ENCODE measurements at regions of chr10 and their contacts with region 1.

Region 1: GRCh38 chr10:101830322-101831168 is 12.3 kb upstream of the OGA start:
- DNase-seq: peak; percentile 91 to 99 (median 94)
- ATAC-seq: peak; percentile 79
- H3K4me3 ChIP-seq: peak overlapping the region; percentile 63
- H3K4me3 Mint-ChIP-seq: peak overlapping the region; percentile 94
- H3K27ac ChIP-seq: peak overlapping the region; percentile 76 to 85
- H3K27ac Mint-ChIP-seq: peak overlapping the region; percentile 99
- H3K4me1 ChIP-seq: peaks cover 69% of the 10 kb centered on the region
- H3K4me1 Mint-ChIP-seq: peaks cover 55% of the 10 kb centered on the region
- H3K27me3 ChIP-seq: no peaks in the 10 kb centered on the region
- H3K27me3 Mint-ChIP-seq: peaks cover 5% of the 10 kb centered on the region
- CTCF ChIP-seq: no peak

Region 2: DNA sequence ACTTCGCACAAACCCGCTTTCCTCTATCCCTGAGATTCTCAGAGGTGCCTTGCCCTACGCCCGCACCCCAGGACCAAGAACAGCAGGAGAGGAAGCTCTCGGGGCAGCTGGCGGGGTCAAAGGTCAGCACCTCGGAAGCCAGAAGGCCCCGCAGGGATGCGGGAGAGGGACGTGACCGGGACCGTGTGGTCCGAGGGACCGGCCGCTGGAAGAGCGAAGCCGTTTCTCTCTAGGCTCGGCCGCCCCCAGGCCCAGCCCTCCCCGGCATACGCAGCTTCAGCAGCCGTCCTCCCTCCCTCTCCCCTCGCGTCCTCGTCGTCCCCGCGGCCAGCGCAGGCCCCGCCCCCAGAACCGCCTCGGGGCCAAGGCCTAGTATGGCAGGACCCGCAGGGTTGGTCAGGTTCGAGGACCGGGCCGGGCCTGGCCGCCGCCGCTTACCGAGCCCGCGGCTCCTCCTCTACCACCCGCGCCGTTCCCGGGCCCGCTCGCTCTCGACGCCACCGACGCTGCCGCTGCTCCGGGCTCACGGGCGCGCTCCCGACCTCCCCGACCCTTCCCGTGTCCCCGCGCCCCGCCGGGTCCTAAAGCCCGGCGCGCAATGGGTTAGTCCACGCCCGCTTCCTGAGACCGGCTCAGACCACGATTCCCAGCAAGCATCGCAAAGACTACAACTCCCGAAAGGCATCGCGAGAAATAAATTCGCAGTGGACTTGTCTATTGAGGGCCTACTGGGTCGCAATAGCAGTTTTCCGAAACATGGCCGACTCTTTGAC is 225.3 kb after region 1 on chr10 and contains the start of gene ARMH3:
- CTCF ChIA-PET with region 1: no interaction called
- POLR2A ChIA-PET with region 1: no interaction called
- intact Hi-C with region 1: loop called in 1 of 2 experiments (anchors 5 kb)
- DNase-seq: peak; percentile 75 to 96 (median 84)
- ATAC-seq: peak; percentile 93
- H3K4me3 ChIP-seq: peak within 1 kb of the TSS; percentile 84
- H3K4me3 Mint-ChIP-seq: peak within 1 kb of the TSS; percentile 96
- H3K27ac ChIP-seq: peak within 1 kb of the TSS; percentile 70 to 83
- H3K27ac Mint-ChIP-seq: peak within 1 kb of the TSS; percentile 87
- H3K4me1 ChIP-seq: peaks cover 48% of the 10 kb centered on the region
- H3K4me1 Mint-ChIP-seq: peaks cover 45% of the 10 kb centered on the region
- H3K27me3 ChIP-seq: no peaks in the 10 kb centered on the region
- H3K27me3 Mint-ChIP-seq: no peaks in the 10 kb centered on the region
- CTCF ChIP-seq: no peak
- total RNA-seq, gene ARMH3: 17.7 to 18.9 TPM

Region 3: DNA sequence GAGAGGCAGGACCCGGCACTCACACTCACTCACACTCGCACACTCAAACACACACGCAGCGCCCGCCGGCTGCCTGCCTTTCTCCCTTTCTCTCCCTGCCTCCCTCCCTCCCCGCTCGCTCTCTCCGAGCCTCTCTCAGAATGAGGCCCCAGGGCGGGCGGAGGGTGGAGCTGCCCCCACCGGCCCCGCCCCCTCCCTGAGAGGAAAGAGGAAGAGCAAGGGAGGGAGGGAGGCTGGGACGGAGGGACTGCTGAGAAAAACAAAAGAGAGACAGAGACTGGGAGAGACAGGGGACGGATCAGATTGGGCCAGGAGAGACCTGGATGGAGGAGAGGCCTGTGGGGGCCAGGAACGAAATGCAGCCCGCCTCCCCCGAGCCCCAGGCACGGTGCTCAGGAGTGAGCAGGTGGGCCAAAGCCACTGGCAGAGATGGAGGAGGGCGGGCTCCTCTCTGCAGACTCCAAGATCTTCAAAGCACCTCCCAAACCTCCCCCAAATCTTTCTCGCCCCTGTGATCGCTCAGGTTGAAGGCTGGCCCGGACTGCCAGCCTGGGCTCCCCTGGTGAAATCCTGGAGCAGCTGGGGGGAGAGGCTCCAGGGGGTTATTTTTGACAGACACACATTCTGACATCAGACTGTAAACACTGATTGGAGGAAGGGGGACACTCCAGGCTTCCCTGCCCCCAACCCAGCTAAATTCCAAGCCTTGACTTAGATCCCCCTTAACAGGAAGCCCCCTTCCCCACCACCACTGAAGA is 284.5 kb after region 1 on chr10:
- CTCF ChIA-PET with region 1: no interaction called
- POLR2A ChIA-PET with region 1: interaction called, 4 read pairs
- intact Hi-C with region 1: loop called in 1 of 2 experiments (anchors 5 kb)
- DNase-seq: peak; percentile 65 to 90 (median 84)
- ATAC-seq: peak; percentile 60
- H3K4me3 ChIP-seq: peak overlapping the region; percentile 58
- H3K4me3 Mint-ChIP-seq: peak overlapping the region; percentile 89
- H3K27ac ChIP-seq: peak overlapping the region; percentile 76 to 96
- H3K27ac Mint-ChIP-seq: peak overlapping the region; percentile 89
- H3K4me1 ChIP-seq: peaks cover 77% of the 10 kb centered on the region
- H3K4me1 Mint-ChIP-seq: peaks cover 73% of the 10 kb centered on the region
- H3K27me3 ChIP-seq: no peaks in the 10 kb centered on the region
- H3K27me3 Mint-ChIP-seq: no peaks in the 10 kb centered on the region
- CTCF ChIP-seq: no peak

Measured in CD4-positive, alpha-beta T cell (primary cell).